ENCODE measurements at regions of chr16 and their contacts with region 1.

Region 1: DNA sequence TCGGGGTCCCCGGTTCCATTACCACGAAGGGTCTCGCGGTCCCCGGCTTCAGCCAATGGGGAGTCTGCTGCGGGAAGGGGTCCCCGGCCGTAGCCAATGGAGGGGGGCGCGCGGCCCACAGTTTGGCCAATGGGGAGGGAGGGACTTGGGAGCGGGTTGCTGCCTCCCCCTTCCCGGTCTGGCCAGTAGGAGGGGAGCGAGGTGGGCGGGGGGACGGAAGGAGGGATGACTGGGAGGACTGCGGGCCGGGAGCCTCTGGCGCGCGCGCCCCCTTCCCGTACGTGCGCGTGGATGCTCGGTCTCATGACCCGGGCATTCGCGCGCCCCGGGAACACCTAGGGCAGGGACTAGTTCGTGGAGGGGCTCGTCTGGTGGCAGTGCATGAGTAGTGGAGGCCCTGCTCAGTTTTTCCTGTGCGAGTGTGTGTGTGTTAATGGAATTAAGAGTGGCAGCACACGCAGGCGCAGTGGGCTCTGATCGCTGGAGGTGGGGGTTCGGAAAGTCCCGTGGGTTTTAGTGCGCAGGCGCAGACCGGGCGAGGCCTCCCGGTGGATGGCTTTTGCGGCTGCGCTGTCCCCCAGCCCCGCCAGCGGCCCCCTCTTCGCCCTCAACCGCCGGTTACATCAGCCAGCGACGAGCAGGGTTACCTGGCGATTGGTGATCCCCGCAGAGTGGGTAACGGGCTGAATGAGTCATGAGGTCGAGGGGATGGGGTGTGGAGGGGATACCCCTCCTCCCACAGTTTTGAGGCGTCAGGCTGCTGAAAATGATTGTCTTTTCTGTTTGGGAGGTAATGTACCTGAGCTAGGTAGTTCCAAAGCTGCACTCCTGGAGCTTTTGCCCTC is 1.3 kb downstream of the ATXN2L start:
- DNase-seq: peak; percentile 94
- ATAC-seq: peak; percentile 79
- H3K4me3 Mint-ChIP-seq: peak overlapping the region; percentile 98
- H3K27ac Mint-ChIP-seq: peak overlapping the region; percentile 98
- H3K4me1 Mint-ChIP-seq: peaks cover 37% of the 10 kb centered on the region
- H3K27me3 Mint-ChIP-seq: no peaks in the 10 kb centered on the region

Region 2: GRCh38 chr16:28494121-28494851 is 329.8 kb before region 1 on chr16 and contains the start of gene APOBR:
- POLR2A ChIA-PET with region 1: interaction called, 10 read pairs
- DNase-seq: peak; percentile 81
- ATAC-seq: peak; percentile 74
- H3K4me3 Mint-ChIP-seq: peak within 1 kb of the TSS; percentile 97
- H3K27ac Mint-ChIP-seq: peak within 1 kb of the TSS; percentile 96
- H3K4me1 Mint-ChIP-seq: peaks cover 40% of the 10 kb centered on the region
- H3K27me3 Mint-ChIP-seq: no peaks in the 10 kb centered on the region
- total RNA-seq, gene APOBR: 23.9 to 26.1 TPM

Region 3: DNA sequence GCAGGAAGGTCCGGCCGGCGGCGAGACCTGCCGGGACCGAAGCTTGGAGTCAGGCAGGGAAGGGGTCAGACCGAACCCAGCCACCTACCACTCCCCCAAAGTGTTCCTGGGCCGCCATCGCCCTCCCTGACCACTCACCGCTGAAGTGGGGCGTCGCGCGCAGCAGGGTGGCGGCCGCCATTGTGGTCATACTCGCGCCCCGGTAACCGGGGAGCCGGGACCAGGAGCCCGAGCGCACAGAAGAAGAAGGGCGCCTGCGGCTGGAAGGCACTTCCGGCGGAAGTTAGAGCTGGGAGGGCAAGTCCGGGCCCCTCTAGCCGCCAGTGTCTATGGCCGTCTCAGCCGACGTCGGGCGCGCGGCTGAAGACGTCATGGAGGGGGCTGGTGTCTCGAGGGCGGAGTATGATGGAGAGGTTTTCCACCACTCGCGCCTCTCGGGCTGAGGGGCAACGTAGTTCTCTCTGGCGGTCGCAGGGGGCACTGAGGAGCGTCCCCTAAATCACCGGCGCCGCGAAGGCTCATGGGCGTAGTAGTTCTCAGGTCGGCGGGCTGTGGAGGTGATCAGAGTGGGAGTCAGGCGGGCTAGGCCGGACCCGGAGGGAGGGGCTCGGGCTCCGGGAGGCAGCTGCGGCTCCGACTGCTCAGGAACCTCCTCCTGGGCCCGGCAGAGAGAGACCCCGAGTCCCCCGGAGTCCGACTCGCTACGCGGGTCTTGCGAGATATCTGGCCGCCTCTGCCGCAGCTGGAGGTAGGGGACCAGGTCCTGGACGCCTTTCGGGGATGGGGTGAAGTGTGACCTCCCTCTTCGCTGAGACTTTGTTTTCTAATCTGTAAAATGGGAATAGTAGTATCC is 22.2 kb after region 1 on chr16 and contains the start of gene TUFM:
- POLR2A ChIA-PET with region 1: interaction called, 65 read pairs
- DNase-seq: peak; percentile 96
- ATAC-seq: peak; percentile 92
- H3K4me3 Mint-ChIP-seq: peak within 1 kb of the TSS; percentile 88
- H3K27ac Mint-ChIP-seq: peak within 1 kb of the TSS; percentile 93
- H3K4me1 Mint-ChIP-seq: peaks cover 19% of the 10 kb centered on the region
- H3K27me3 Mint-ChIP-seq: no peaks in the 10 kb centered on the region
- total RNA-seq, gene TUFM: 117 to 119 TPM

Region 4: GRCh38 chr16:28863929-28864793 is 40.1 kb after region 1 on chr16:
- POLR2A ChIA-PET with region 1: interaction called, 30 read pairs
- DNase-seq: no peak
- ATAC-seq: no peak
- H3K4me3 Mint-ChIP-seq: peak overlapping the region; percentile 98
- H3K27ac Mint-ChIP-seq: peak overlapping the region; percentile 95
- H3K4me1 Mint-ChIP-seq: peaks cover 22% of the 10 kb centered on the region
- H3K27me3 Mint-ChIP-seq: no peaks in the 10 kb centered on the region

Region 5: GRCh38 chr16:28879841-28880588 is 55.9 kb after region 1 on chr16:
- POLR2A ChIA-PET with region 1: interaction called, 11 read pairs
- DNase-seq: peak; percentile 89
- ATAC-seq: peak; percentile 94
- H3K4me3 Mint-ChIP-seq: peak overlapping the region; percentile 92
- H3K27ac Mint-ChIP-seq: peak overlapping the region; percentile 82
- H3K4me1 Mint-ChIP-seq: peaks cover 27% of the 10 kb centered on the region
- H3K27me3 Mint-ChIP-seq: no peaks in the 10 kb centered on the region

Region 6: GRCh38 chr16:28924732-28925385 is 100.8 kb after region 1 on chr16 and contains the start of gene RABEP2:
- POLR2A ChIA-PET with region 1: interaction called, 18 read pairs
- DNase-seq: peak; percentile 99
- ATAC-seq: peak; percentile 88
- H3K4me3 Mint-ChIP-seq: peak within 1 kb of the TSS; percentile 99
- H3K27ac Mint-ChIP-seq: peak within 1 kb of the TSS; percentile 98
- H3K4me1 Mint-ChIP-seq: peaks cover 20% of the 10 kb centered on the region
- H3K27me3 Mint-ChIP-seq: no peaks in the 10 kb centered on the region
- total RNA-seq, gene RABEP2: 23.7 to 25.6 TPM

Region 7: GRCh38 chr16:28950648-28951409 is 126.7 kb after region 1 on chr16 and contains the start of gene NFATC2IP:
- POLR2A ChIA-PET with region 1: interaction called, 10 read pairs
- DNase-seq: peak; percentile 99
- ATAC-seq: peak; percentile 96
- H3K4me3 Mint-ChIP-seq: peak within 1 kb of the TSS; percentile 98
- H3K27ac Mint-ChIP-seq: peak within 1 kb of the TSS; percentile 98
- H3K4me1 Mint-ChIP-seq: peaks cover 23% of the 10 kb centered on the region
- H3K27me3 Mint-ChIP-seq: peaks cover 5% of the 10 kb centered on the region
- total RNA-seq, gene NFATC2IP: 115 to 117 TPM

Measured in activated naive CD8-positive, alpha-beta T cell treated with anti-CD3 and anti-CD28 coated beads, Interleukin-2, amount 10 ng/mL, durations not matched to agents 7 days and 5 days (primary cell).